ENCODE measurements at regions of chr5 and their contacts with region 1.

Region 1: GRCh38 chr5:79857714-79858409 is 133.2 kb downstream of the MTX3 start:
- DNase-seq: peak; percentile 23
- ATAC-seq: peak; percentile 79
- H3K4me3 ChIP-seq: no peak overlapping the region
- H3K27ac ChIP-seq: no peak overlapping the region
- H3K4me1 ChIP-seq: no peaks in the 10 kb centered on the region
- H3K27me3 ChIP-seq: peaks cover 0 to 2% of the 10 kb centered on the region in 2 experiments; a peak in 1 of 4 replicates
- CTCF ChIP-seq: peak; percentile 87 to 98 (median 97)
- EP300 ChIP-seq: no peak
- POLR2A ChIP-seq: no peak
- RAD21 ChIP-seq: peak; percentile 89

Region 2: GRCh38 chr5:79552984-79553383 is 304.9 kb before region 1 on chr5:
- CTCF ChIA-PET with region 1: interaction called, 9 read pairs
- POLR2A ChIA-PET with region 1: no interaction called
- RAD21 ChIA-PET with region 1: interaction called, 4 read pairs
- SMC1A ChIA-PET with region 1: interaction called, 5 read pairs
- in situ Hi-C with region 1: loop called (anchors 5 kb)
- intact Hi-C with region 1: no loop called
- DNase-seq: no peak
- ATAC-seq: no peak
- H3K4me3 ChIP-seq: no peak overlapping the region
- H3K27ac ChIP-seq: no peak overlapping the region
- H3K4me1 ChIP-seq: no peaks in the 10 kb centered on the region
- H3K27me3 ChIP-seq: no peaks in the 10 kb centered on the region
- CTCF ChIP-seq: no peak
- EP300 ChIP-seq: no peak
- POLR2A ChIP-seq: no peak
- RAD21 ChIP-seq: no peak

Region 3: GRCh38 chr5:79702606-79703382 is 155.1 kb before region 1 on chr5:
- CTCF ChIA-PET with region 1: no interaction called
- POLR2A ChIA-PET with region 1: no interaction called
- RAD21 ChIA-PET with region 1: no interaction called
- SMC1A ChIA-PET with region 1: no interaction called
- in situ Hi-C with region 1: no loop called
- intact Hi-C with region 1: loop called (anchors 1 kb)
- DNase-seq: no peak
- ATAC-seq: peak; percentile 51
- H3K4me3 ChIP-seq: no peak overlapping the region
- H3K27ac ChIP-seq: no peak overlapping the region
- H3K4me1 ChIP-seq: peaks cover 10% of the 10 kb centered on the region
- H3K27me3 ChIP-seq: no peaks in the 10 kb centered on the region
- CTCF ChIP-seq: peak; percentile 32 to 61 (median 46); a peak in 5 of 6 replicates
- EP300 ChIP-seq: no peak
- POLR2A ChIP-seq: no peak
- RAD21 ChIP-seq: peak; percentile 53